Activated T-helper 2 cell treated with anti-CD3 and anti-CD28 coated beads, Interferon-gamma antibody, Interleukin-2, Interleukin-4, amounts not matched to agents 10 μg/mL and 5 μg/mL and 100 μg/mL, durations not matched to agents 14 hours and 24 hours and 36 hours (primary cell): ENCODE measurements at regions of chrX and their contacts with region 1.

Region 1: GRCh38 chrX:130857207-130857606 is 45.8 kb downstream of the ENOX2 start:
- DNase-seq: no peak
- H3K4me3 Mint-ChIP-seq: no peak overlapping the region
- H3K27ac Mint-ChIP-seq: peak overlapping the region; percentile 36
- H3K4me1 Mint-ChIP-seq: peaks cover 6% of the 10 kb centered on the region
- H3K27me3 Mint-ChIP-seq: no peaks in the 10 kb centered on the region

Region 2: GRCh38 chrX:130772105-130772775 is 85.0 kb before region 1 on chrX:
- intact Hi-C with region 1: loop called (anchors 10 kb)
- DNase-seq: no peak
- H3K4me3 Mint-ChIP-seq: no peak overlapping the region
- H3K27ac Mint-ChIP-seq: no peak overlapping the region
- H3K4me1 Mint-ChIP-seq: peaks cover 23% of the 10 kb centered on the region
- H3K27me3 Mint-ChIP-seq: no peaks in the 10 kb centered on the region

Region 3: DNA sequence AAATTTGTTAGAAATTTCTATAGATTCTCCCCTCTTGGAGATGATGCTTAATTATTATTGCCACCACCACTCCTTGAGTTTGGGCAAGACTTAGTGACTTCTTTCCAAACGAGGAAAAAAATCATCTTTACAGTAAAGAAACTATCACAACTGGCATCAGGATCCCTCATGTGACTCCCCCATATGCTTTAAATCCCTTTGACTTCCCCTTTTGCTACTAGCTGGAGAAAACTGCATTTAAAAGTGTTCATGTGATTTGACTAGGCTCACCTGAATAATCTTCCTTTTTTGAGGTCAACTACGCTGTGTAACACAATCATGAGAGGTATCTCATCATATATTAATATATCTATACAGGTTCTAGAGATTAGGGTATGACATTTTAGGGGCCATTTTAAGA is 76.2 kb after region 1 on chrX:
- intact Hi-C with region 1: no loop called
- DNase-seq: no peak
- H3K4me3 Mint-ChIP-seq: no peak overlapping the region
- H3K27ac Mint-ChIP-seq: no peak overlapping the region
- H3K4me1 Mint-ChIP-seq: no peaks in the 10 kb centered on the region
- H3K27me3 Mint-ChIP-seq: peaks cover under 1% of the 10 kb centered on the region